CD8-positive, alpha-beta T cell (primary cell): ENCODE measurements at regions of chr19 and their contacts with region 1.

Region 1: DNA sequence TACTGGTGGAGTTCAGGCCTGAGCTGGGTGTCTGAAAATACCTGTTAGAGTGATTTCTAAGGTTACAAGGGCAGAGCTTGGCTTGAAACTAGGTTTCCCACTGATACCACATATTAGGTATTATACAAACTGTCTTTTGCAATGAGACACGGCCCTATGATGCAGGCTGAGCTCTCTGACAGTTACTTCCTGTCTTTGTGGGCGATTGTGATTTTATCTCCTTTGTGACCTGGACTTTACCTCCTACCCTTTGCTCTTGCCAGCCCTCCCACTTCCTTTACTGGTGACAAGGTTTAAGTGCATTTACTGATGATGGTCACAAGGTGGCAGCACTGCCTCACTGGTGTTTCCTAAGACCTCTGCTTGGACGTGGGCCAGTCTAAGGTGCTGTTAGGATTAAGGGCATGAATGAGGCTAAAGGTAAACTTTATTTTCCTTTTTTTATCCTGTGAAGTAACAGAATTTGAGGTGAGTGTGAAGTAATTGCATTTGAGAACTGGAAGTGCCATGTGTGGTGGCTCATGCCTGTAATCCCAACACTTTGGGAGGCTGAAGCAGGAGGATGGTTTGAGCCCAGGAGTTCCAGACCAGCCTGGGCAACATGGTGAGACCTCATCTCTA is 7.7 kb upstream of the CXCL17 start:
- DNase-seq: peak; percentile 57 to 96 (median 76)
- ATAC-seq: peak; percentile 96
- H3K4me3 ChIP-seq: no peak overlapping the region
- H3K4me3 Mint-ChIP-seq: no peak overlapping the region
- H3K27ac ChIP-seq: peak overlapping the region; percentile 57 to 76
- H3K27ac Mint-ChIP-seq: no peak overlapping the region
- H3K4me1 ChIP-seq: peaks cover 11% of the 10 kb centered on the region
- H3K4me1 Mint-ChIP-seq: peaks cover 8% of the 10 kb centered on the region
- H3K27me3 ChIP-seq: no peaks in the 10 kb centered on the region
- H3K27me3 Mint-ChIP-seq: no peaks in the 10 kb centered on the region
- CTCF ChIP-seq: peak; percentile 90

Region 2: GRCh38 chr19:42268704-42269477 is 181.5 kb before region 1 on chr19 and contains the start of gene CIC:
- CTCF ChIA-PET with region 1: no interaction called
- POLR2A ChIA-PET with region 1: no interaction called
- intact Hi-C with region 1: no loop called
- DNase-seq: peak; percentile 97 to 100 (median 99)
- ATAC-seq: peak; percentile 70
- H3K4me3 ChIP-seq: peak within 1 kb of the TSS; percentile 70 to 83
- H3K4me3 Mint-ChIP-seq: peak within 1 kb of the TSS; percentile 86
- H3K27ac ChIP-seq: peak within 1 kb of the TSS; percentile 93 to 99
- H3K27ac Mint-ChIP-seq: peak within 1 kb of the TSS; percentile 97
- H3K4me1 ChIP-seq: peaks cover 29% of the 10 kb centered on the region
- H3K4me1 Mint-ChIP-seq: peaks cover 34% of the 10 kb centered on the region
- H3K27me3 ChIP-seq: no peaks in the 10 kb centered on the region
- H3K27me3 Mint-ChIP-seq: no peaks in the 10 kb centered on the region
- CTCF ChIP-seq: no peak
- total RNA-seq, gene CIC: 111 to 112 TPM

Region 3: DNA sequence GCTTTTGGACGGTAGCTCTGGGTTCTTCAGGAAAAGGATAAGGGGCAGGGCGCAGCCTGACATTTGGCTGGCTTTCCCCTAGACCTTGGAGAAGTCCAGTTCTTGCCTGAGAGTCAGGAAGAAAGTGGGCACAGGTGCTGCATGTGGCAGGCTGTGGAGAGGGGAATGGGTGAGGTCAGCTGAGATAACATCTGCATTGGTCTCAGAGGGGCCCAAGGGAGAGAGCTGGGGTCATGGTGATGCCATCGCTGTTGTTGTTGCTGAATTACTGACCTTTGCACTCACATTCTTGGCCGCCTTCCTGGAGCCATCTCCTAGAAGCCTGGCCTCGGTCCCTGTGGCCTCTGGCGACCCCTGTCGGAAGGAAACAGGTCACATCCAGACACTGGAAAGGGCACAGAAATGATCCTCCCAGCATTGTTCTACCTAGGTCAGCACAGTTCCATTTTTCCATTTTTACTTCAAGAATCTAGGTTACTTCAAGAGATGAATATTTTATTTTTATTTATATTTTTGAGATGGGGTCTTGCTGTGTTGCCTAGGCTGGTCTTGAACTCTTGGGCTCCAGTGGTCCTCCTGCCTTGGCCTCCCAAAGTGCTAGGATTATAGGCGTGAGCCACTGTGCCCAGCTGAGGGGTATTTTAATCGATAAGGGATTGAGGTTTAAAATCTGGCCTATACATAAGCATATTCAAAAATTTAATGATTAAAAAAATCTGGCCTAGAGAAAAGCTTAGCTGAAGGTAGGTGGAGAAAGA is 16.7 kb before region 1 on chr19:
- CTCF ChIA-PET with region 1: interaction called, 23 read pairs
- POLR2A ChIA-PET with region 1: no interaction called
- intact Hi-C with region 1: no loop called
- DNase-seq: peak; percentile 32 to 77 (median 66)
- ATAC-seq: peak; percentile 43
- H3K4me3 ChIP-seq: no peak overlapping the region
- H3K4me3 Mint-ChIP-seq: no peak overlapping the region
- H3K27ac ChIP-seq: no peak overlapping the region
- H3K27ac Mint-ChIP-seq: no peak overlapping the region
- H3K4me1 ChIP-seq: no peaks in the 10 kb centered on the region
- H3K4me1 Mint-ChIP-seq: peaks cover 4% of the 10 kb centered on the region
- H3K27me3 ChIP-seq: no peaks in the 10 kb centered on the region
- H3K27me3 Mint-ChIP-seq: no peaks in the 10 kb centered on the region
- CTCF ChIP-seq: peak; percentile 62

Region 4: DNA sequence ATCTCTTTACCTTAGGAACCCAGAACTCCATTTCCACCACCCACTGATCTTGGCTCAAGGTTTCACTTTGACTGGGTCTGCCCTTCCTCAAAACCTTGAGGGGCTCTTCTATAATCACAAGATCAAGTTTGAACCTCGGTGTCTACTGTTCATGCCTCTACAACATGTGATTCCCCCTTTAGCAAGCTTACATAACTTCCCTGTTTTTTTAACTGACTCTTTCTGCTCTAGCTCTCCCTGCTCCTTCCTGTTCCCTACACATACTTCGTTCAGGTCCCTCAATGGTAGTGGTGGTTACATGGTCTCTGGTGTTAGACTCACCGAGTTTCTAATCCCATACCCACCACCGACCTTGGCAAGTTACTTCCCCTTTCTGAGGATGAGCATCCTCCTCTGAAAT is 117.6 kb after region 1 on chr19:
- CTCF ChIA-PET with region 1: interaction called, 12 read pairs
- POLR2A ChIA-PET with region 1: no interaction called
- intact Hi-C with region 1: no loop called
- DNase-seq: no peak
- ATAC-seq: no peak
- H3K4me3 ChIP-seq: no peak overlapping the region
- H3K4me3 Mint-ChIP-seq: no peak overlapping the region
- H3K27ac ChIP-seq: no peak overlapping the region
- H3K27ac Mint-ChIP-seq: no peak overlapping the region
- H3K4me1 ChIP-seq: no peaks in the 10 kb centered on the region
- H3K4me1 Mint-ChIP-seq: peaks cover 2% of the 10 kb centered on the region
- H3K27me3 ChIP-seq: no peaks in the 10 kb centered on the region
- H3K27me3 Mint-ChIP-seq: peaks cover 23% of the 10 kb centered on the region
- CTCF ChIP-seq: no peak

Region 5: GRCh38 chr19:42596391-42597072 is 146.1 kb after region 1 on chr19:
- CTCF ChIA-PET with region 1: interaction called, 11 read pairs
- POLR2A ChIA-PET with region 1: no interaction called
- intact Hi-C with region 1: loop called in 1 of 2 experiments (anchors 1 kb)
- DNase-seq: peak in 7 of 9 experiments; percentile 12 to 60 (median 48)
- ATAC-seq: no peak
- H3K4me3 ChIP-seq: no peak overlapping the region
- H3K4me3 Mint-ChIP-seq: no peak overlapping the region
- H3K27ac ChIP-seq: no peak overlapping the region
- H3K27ac Mint-ChIP-seq: no peak overlapping the region
- H3K4me1 ChIP-seq: no peaks in the 10 kb centered on the region
- H3K4me1 Mint-ChIP-seq: no peaks in the 10 kb centered on the region
- H3K27me3 ChIP-seq: no peaks in the 10 kb centered on the region
- H3K27me3 Mint-ChIP-seq: peaks cover 20% of the 10 kb centered on the region
- CTCF ChIP-seq: peak; percentile 99

Region 6: DNA sequence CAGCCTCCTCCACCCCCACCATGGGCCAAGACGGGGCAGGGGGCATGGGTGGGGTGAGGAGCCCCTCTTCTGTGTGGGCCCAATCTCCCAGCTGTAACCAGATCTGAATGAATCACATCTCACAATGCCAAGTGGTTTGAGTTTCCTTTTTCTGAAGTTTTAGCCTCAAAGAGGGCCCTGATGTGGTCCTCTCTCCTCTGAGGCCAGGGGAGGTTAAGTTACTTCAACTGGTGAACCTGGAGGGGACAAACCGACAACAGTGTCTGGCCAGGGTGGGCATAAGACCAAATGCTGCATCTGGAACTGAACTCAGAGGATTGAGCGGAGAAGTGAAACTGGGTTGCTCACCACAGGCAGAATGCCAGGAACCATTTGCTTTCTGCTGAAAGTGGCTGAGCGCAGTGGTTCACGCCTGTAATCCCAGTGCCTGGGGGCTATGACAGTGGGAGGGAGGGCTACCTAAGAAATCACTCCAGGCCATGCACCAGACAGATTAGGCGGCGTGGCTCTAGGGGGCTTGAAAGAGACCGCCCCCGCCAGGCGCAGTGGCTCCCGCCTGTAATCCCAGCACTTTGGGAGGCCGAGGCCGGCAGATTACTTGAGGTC is 1250.1 kb after region 1 on chr19:
- CTCF ChIA-PET with region 1: no interaction called
- POLR2A ChIA-PET with region 1: no interaction called
- intact Hi-C with region 1: no loop called
- DNase-seq: peak in 2 of 9 experiments; percentile 11 to 37
- ATAC-seq: no peak
- H3K4me3 ChIP-seq: peak overlapping the region in 1 of 2 experiments; percentile 31
- H3K4me3 Mint-ChIP-seq: peak overlapping the region; percentile 80
- H3K27ac ChIP-seq: peak overlapping the region in 1 of 2 experiments; percentile 78
- H3K27ac Mint-ChIP-seq: peak overlapping the region; percentile 78
- H3K4me1 ChIP-seq: peaks cover 14% of the 10 kb centered on the region
- H3K4me1 Mint-ChIP-seq: peaks cover 24% of the 10 kb centered on the region
- H3K27me3 ChIP-seq: no peaks in the 10 kb centered on the region
- H3K27me3 Mint-ChIP-seq: peaks cover 22% of the 10 kb centered on the region
- CTCF ChIP-seq: no peak